Gastrocnemius medialis (tissue), 4 donors: ENCODE measurements at regions of chr4 and their contacts with region 1.

Region 1: GRCh38 chr4:110287130-110287529 is 88.7 kb upstream of the ELOVL6 start:
- DNase-seq: peak; percentile 24 to 38
- ATAC-seq: peak; percentile 96 to 98
- H3K4me3 ChIP-seq: no peak overlapping the region
- H3K27ac ChIP-seq: peak overlapping the region in 2 of 4 donors; percentile 34 to 56
- H3K4me1 ChIP-seq: peaks cover 0 to 5% of the 10 kb centered on the region in 2 donors
- H3K27me3 ChIP-seq: no peaks in the 10 kb centered on the region
- CTCF ChIP-seq: no peak
- POLR2A ChIP-seq: no peak

Region 2: GRCh38 chr4:109864134-109864533 is 423.0 kb before region 1 on chr4:
- in situ Hi-C with region 1: no loop called
- intact Hi-C with region 1: no loop called
- DNase-seq: no peak
- ATAC-seq: no peak
- H3K4me3 ChIP-seq: no peak overlapping the region
- H3K27ac ChIP-seq: no peak overlapping the region
- H3K4me1 ChIP-seq: no peaks in the 10 kb centered on the region
- H3K27me3 ChIP-seq: no peaks in the 10 kb centered on the region
- CTCF ChIP-seq: no peak
- POLR2A ChIP-seq: no peak

Region 3: GRCh38 chr4:110119337-110119736 is 167.8 kb before region 1 on chr4:
- in situ Hi-C with region 1: no loop called
- intact Hi-C with region 1: no loop called
- DNase-seq: no peak
- ATAC-seq: no peak
- H3K4me3 ChIP-seq: no peak overlapping the region
- H3K27ac ChIP-seq: no peak overlapping the region
- H3K4me1 ChIP-seq: no peaks in the 10 kb centered on the region
- H3K27me3 ChIP-seq: no peaks in the 10 kb centered on the region
- CTCF ChIP-seq: no peak
- POLR2A ChIP-seq: no peak

Region 4: DNA sequence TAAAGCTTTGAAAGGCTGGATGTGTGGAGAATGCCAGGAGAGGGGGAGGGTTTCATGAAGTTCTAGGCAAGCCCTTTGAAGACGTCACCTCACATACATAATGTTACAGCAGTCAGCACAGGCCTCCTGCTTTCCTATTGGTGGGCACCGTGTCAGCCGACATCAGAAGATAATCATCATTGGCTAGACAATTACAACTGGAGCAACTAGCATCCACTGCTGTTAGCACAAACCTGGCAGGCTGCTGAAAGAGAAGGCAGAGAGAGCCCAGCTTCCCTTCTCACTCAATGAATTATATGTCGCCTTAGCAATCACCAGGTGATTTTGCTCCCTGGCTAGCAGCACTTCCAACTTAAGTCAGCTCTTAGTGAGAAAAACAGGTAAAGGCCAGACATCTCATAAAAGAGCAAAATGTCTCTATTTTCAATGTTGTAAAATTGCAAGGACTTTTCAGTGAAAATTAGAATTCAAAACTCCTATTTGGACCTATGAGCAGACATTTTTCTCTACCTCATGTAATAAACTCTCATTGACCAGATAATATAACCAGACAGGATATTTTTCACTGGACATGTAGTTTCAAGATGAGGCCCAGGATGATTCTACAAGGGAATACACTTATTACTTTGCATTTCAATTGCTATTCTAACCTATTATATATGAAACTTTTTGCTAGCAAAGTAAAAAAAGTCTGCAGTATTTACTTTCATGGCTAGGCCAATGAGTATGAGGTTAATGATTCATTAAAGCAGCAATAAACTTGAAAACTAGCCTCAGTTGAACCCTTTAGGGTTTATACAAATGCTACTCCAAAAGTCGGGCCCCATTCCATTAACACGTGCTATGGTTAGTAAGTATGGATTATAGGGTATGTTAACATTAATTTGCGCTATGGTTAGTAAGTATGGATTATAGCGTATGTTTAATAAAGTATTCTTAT is 93.0 kb before region 1 on chr4:
- in situ Hi-C with region 1: no loop called
- intact Hi-C with region 1: loop called (anchors 5 kb)
- DNase-seq: peak; percentile 4 to 31
- ATAC-seq: no peak
- H3K4me3 ChIP-seq: no peak overlapping the region
- H3K27ac ChIP-seq: no peak overlapping the region
- H3K4me1 ChIP-seq: no peaks in the 10 kb centered on the region
- H3K27me3 ChIP-seq: no peaks in the 10 kb centered on the region
- CTCF ChIP-seq: no peak
- POLR2A ChIP-seq: no peak